Posterior cingulate gyrus (tissue), 11 donors: ENCODE measurements at regions of chr18 and their contacts with region 1.

Region 1: GRCh38 chr18:47627030-47627429 is 303.4 kb downstream of the SMAD2 start:
- DNase-seq: no peak

Region 2: DNA sequence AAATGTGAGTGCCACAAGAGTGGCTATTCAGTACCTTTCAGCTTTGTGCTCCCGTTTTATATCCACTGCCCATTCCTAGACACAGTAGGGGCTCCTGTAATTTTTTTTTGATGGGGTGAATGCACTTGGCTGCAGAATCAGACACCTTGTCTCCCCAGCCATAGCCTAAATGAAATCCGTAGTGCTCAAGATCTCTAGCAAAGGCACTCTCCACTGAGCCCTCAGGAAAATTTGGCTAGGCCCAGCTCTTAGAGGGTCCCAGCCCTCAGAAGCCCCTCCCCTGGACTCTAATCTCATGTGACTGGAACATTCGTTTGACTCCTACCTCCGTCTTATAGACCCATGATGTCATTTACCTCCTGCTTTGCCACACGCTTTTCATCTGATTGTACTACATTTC is 20.5 kb before region 1 on chr18:
- intact Hi-C with region 1: loop called (anchors 2 kb)
- DNase-seq: no peak

Region 3: GRCh38 chr18:47680488-47680887 is 53.5 kb after region 1 on chr18:
- intact Hi-C with region 1: no loop called
- DNase-seq: no peak